CD8-positive, alpha-beta memory T cell (primary cell): ENCODE measurements at regions of chr2 and their contacts with region 1.

Region 1: DNA sequence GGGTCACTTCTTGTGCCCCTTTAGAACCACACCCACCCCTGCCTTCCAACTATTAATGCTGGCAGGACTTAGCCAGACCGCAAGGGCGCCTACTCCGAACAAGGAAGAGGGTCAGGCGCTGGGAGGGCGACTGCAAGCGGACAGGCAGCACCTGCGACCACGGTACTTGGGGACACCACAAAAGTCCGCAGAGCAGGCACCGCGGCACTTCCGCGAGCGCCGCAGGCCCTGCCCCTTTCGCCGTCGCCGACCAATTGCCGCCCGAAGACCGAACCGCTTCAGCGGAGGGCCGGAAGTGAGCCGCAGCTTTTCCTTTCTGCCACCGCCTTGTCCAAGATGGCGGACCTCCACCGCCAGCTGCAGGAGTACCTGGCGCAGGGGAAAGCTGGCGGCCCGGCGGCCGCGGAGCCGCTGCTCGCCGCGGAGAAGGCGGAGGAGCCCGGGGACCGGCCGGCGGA is at the start of gene SFT2D3:
- DNase-seq: peak; percentile 80 to 93 (median 90)
- H3K4me3 ChIP-seq: peak within 1 kb of the TSS; percentile 77
- H3K4me3 Mint-ChIP-seq: peak within 1 kb of the TSS; percentile 92 to 99 (median 94)
- H3K27ac ChIP-seq: peak within 1 kb of the TSS; percentile 82
- H3K27ac Mint-ChIP-seq: peak within 1 kb of the TSS; percentile 95 to 100 (median 98)
- H3K4me1 ChIP-seq: peaks cover 41% of the 10 kb centered on the region
- H3K4me1 Mint-ChIP-seq: peaks cover 45 to 50% (median 46%) of the 10 kb centered on the region in 3 donors
- H3K27me3 ChIP-seq: no peaks in the 10 kb centered on the region
- H3K27me3 Mint-ChIP-seq: peaks cover 0 to 10% of the 10 kb centered on the region in 2 donors
- total RNA-seq, gene SFT2D3: 4.6 to 5.5 TPM

Region 2: GRCh38 chr2:127526149-127527000 is 174.8 kb before region 1 on chr2 and contains the start of gene IWS1:
- CTCF ChIA-PET with region 1: no interaction called
- POLR2A ChIA-PET with region 1: interaction called, 11 read pairs
- DNase-seq: peak; percentile 87 to 95 (median 93)
- H3K4me3 ChIP-seq: peak within 1 kb of the TSS; percentile 90
- H3K4me3 Mint-ChIP-seq: peak within 1 kb of the TSS; percentile 91 to 97 (median 93)
- H3K27ac ChIP-seq: peak within 1 kb of the TSS; percentile 84
- H3K27ac Mint-ChIP-seq: peak within 1 kb of the TSS; percentile 97 to 99 (median 99)
- H3K4me1 ChIP-seq: peaks cover 19% of the 10 kb centered on the region
- H3K4me1 Mint-ChIP-seq: peaks cover 36 to 52% (median 51%) of the 10 kb centered on the region in 3 donors
- H3K27me3 ChIP-seq: no peaks in the 10 kb centered on the region
- H3K27me3 Mint-ChIP-seq: no peaks in the 10 kb centered on the region
- total RNA-seq, gene IWS1: 49.9 to 53.7 TPM

Region 3: GRCh38 chr2:127576433-127577207 is 124.6 kb before region 1 on chr2:
- CTCF ChIA-PET with region 1: no interaction called
- POLR2A ChIA-PET with region 1: no interaction called
- DNase-seq: no peak
- H3K4me3 ChIP-seq: no peak overlapping the region
- H3K4me3 Mint-ChIP-seq: no peak overlapping the region
- H3K27ac ChIP-seq: no peak overlapping the region
- H3K27ac Mint-ChIP-seq: no peak overlapping the region
- H3K4me1 ChIP-seq: peaks cover 7% of the 10 kb centered on the region
- H3K4me1 Mint-ChIP-seq: peaks cover 0 to 5% (median 3%) of the 10 kb centered on the region in 3 donors
- H3K27me3 ChIP-seq: peaks cover 3% of the 10 kb centered on the region
- H3K27me3 Mint-ChIP-seq: peaks cover 2% of the 10 kb centered on the region in 2 donors

Region 4: DNA sequence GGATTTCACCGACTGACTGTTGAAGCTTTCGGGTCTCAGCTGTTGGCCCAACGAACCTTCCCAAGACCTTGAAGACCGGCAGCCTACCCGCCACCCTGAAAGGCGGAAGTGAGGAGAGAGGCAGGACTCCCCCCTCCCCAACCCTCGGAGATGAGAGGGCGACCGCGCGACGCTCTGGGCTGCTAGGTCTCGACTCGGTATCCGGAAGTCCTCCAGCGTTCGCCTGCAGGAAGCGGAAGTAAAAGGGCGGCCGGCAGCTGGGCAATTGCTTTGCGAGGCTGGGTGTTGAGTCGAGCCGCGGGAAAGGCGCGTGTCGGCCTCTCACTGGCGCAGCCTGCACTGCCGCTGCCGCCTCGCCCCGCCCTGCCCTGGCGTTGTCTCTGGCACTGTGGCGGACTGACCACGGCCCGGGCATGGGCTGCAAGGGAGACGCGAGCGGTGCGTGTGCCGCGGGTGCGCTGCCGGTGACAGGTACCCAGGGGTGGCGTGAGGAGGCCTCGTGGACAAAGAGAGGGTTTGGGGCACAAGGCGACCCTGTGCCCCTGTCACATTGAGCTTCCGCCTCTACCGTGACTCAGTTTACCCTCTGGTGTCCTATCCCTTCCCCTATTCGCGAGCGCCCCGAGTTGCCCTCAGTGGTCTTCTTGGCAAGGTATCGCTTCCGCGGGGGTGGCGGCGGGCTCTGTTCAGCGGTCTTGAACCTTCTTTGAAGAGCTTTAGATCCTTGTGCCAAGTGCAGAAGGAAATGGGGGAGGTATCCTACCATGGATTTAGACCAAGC is 389.9 kb after region 1 on chr2 and contains the start of gene UGGT1:
- CTCF ChIA-PET with region 1: no interaction called
- POLR2A ChIA-PET with region 1: interaction called, 11 read pairs
- DNase-seq: peak; percentile 88 to 95 (median 91)
- H3K4me3 ChIP-seq: peak within 1 kb of the TSS; percentile 97
- H3K4me3 Mint-ChIP-seq: peak within 1 kb of the TSS; percentile 85 to 98 (median 92)
- H3K27ac ChIP-seq: peak within 1 kb of the TSS; percentile 72
- H3K27ac Mint-ChIP-seq: peak within 1 kb of the TSS; percentile 91 to 97 (median 96)
- H3K4me1 ChIP-seq: peaks cover 26% of the 10 kb centered on the region
- H3K4me1 Mint-ChIP-seq: peaks cover 46 to 59% (median 58%) of the 10 kb centered on the region in 3 donors
- H3K27me3 ChIP-seq: no peaks in the 10 kb centered on the region
- H3K27me3 Mint-ChIP-seq: no peaks in the 10 kb centered on the region
- total RNA-seq, gene UGGT1: 54.0 to 55.8 TPM